ENCODE measurements at regions of chr1 and their contacts with region 1.

Region 1: GRCh38 chr1:150708595-150708994 is 11.6 kb upstream of the GOLPH3L start:
- DNase-seq: peak; percentile 64
- H3K4me3 Mint-ChIP-seq: no peak overlapping the region
- H3K27ac Mint-ChIP-seq: no peak overlapping the region
- H3K4me1 Mint-ChIP-seq: peaks cover 5% of the 10 kb centered on the region
- H3K27me3 Mint-ChIP-seq: peaks cover 2% of the 10 kb centered on the region

Region 2: GRCh38 chr1:150841626-150842025 is 133.0 kb after region 1 on chr1:
- CTCF ChIA-PET with region 1: interaction called, 3 read pairs
- intact Hi-C with region 1: loop called (anchors 2 kb)
- DNase-seq: no peak
- H3K4me3 Mint-ChIP-seq: no peak overlapping the region
- H3K27ac Mint-ChIP-seq: no peak overlapping the region
- H3K4me1 Mint-ChIP-seq: peaks cover 35% of the 10 kb centered on the region
- H3K27me3 Mint-ChIP-seq: no peaks in the 10 kb centered on the region

Measured in activated naive CD4-positive, alpha-beta T cell treated with anti-CD3 and anti-CD28 coated beads for 36 hours (primary cell).